Stomach (tissue), 19 donors: ENCODE measurements at regions of chr6 and their contacts with region 1.

Region 1: GRCh38 chr6:75208298-75209183 is 2.7 kb upstream of the COL12A1 start:
- DNase-seq: peak; percentile 85 to 94
- H3K4me3 ChIP-seq: peak overlapping the region; percentile 19 to 34 (median 20)
- H3K27ac ChIP-seq: peak overlapping the region in 4 of 5 donors; percentile 18 to 89 (median 52)
- H3K4me1 ChIP-seq: peaks cover 33 to 61% (median 55%) of the 10 kb centered on the region in 4 donors
- H3K27me3 ChIP-seq: peaks cover 3 to 52% (median 44%) of the 10 kb centered on the region in 3 donors
- CTCF ChIP-seq: peak in 5 of 7 experiments; percentile 68 to 89 (median 79)
- EP300 ChIP-seq: no peak
- POLR2A ChIP-seq: no peak

Region 2: DNA sequence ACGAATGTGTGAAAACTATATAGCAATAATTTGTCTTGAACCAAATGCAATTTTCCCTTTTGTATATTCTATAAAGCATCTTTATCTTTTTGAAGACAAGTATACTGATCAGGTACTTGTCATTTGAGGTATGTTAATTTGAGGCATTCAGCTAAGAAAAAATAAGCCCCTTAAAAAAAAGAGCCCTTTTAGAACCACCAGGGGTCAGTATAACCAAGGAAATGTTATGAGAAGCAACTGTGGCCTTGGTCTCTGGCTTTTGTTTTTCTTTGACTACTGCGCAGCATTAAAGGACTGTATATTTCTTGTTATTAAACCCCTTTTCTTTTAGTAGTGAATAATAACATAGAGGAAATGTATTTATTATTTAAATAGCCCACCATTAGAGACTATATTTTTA is 1469.4 kb before region 1 on chr6:
- intact Hi-C with region 1: loop called (anchors 5 kb)
- DNase-seq: peak in 1 of 2 donors; percentile 85
- H3K4me3 ChIP-seq: no peak overlapping the region
- H3K27ac ChIP-seq: no peak overlapping the region
- H3K4me1 ChIP-seq: no peaks in the 10 kb centered on the region
- H3K27me3 ChIP-seq: no peaks in the 10 kb centered on the region
- CTCF ChIP-seq: peak in 5 of 7 experiments; percentile 41 to 82 (median 63)
- EP300 ChIP-seq: no peak
- POLR2A ChIP-seq: no peak

Region 3: DNA sequence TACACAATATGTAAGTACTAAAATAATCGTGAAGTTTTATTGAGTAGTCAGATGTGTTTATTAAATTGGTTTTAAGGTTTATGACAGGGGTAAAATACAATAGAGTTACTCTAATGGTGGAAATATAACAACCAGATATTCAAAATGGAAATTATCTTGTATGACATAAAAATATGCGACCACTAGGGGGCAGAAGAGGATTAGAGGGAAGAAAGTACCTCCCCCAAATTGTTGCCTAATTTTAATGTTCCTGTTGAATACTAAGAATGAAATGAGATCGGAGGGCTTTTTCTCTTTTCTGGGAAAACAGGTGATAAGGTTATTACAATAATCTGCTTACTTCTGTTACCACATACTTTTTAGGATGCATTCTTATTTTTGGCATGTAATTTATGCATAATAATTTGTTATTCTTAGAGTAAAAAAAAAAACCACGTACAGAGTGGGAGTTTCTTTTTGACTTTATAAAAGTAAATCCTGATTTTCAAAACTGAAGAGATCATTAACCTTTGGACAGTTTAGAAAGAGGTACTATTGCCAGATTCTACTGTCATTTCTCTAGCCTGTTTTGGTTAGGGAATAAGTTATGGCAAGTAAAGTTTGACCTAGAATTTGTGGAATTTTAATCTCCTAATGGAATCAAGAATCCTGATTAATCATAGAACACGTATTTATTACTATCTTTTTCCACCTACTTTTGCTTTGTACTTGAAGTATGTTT is 1353.4 kb before region 1 on chr6:
- intact Hi-C with region 1: loop called (anchors 10 kb)
- DNase-seq: peak in 1 of 2 donors; percentile 76
- H3K4me3 ChIP-seq: no peak overlapping the region
- H3K27ac ChIP-seq: no peak overlapping the region
- H3K4me1 ChIP-seq: peaks cover 0 to 11% (median 3%) of the 10 kb centered on the region in 4 donors
- H3K27me3 ChIP-seq: no peaks in the 10 kb centered on the region
- CTCF ChIP-seq: peak in 4 of 7 experiments; percentile 12 to 93 (median 67)
- EP300 ChIP-seq: no peak
- POLR2A ChIP-seq: no peak

Region 4: GRCh38 chr6:74409447-74409846 is 799.1 kb before region 1 on chr6:
- intact Hi-C with region 1: loop called (anchors 5 kb)
- DNase-seq: peak in 1 of 2 donors; percentile 74
- H3K4me3 ChIP-seq: no peak overlapping the region
- H3K27ac ChIP-seq: no peak overlapping the region
- H3K4me1 ChIP-seq: no peaks in the 10 kb centered on the region
- H3K27me3 ChIP-seq: no peaks in the 10 kb centered on the region
- CTCF ChIP-seq: peak in 4 of 7 experiments; percentile 18 to 45 (median 38)
- EP300 ChIP-seq: no peak
- POLR2A ChIP-seq: no peak

Region 5: DNA sequence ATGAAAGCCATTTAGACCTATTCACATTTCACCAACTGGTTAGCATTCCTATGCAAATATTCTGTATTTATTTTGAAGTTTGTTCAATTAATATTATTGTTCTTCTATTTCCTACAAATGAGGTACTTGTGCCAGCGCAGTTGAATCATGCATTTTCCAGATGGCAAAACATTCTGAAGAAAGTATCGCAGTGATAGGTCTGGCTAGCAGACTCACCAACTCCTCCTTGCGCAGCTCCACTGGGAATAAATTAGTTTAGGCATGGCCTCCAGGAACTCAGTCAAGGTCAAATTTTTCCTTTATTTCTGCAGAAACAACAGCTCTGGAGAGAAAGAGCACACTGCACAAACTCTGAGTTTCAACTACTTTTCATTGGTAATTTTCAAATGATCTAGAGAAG is 440.4 kb before region 1 on chr6:
- intact Hi-C with region 1: no loop called
- DNase-seq: no peak
- H3K4me3 ChIP-seq: no peak overlapping the region
- H3K27ac ChIP-seq: no peak overlapping the region
- H3K4me1 ChIP-seq: no peaks in the 10 kb centered on the region
- H3K27me3 ChIP-seq: no peaks in the 10 kb centered on the region
- CTCF ChIP-seq: no peak
- EP300 ChIP-seq: no peak
- POLR2A ChIP-seq: no peak